ENCODE measurements at regions of chr6 and their contacts with region 1.

Region 1: DNA sequence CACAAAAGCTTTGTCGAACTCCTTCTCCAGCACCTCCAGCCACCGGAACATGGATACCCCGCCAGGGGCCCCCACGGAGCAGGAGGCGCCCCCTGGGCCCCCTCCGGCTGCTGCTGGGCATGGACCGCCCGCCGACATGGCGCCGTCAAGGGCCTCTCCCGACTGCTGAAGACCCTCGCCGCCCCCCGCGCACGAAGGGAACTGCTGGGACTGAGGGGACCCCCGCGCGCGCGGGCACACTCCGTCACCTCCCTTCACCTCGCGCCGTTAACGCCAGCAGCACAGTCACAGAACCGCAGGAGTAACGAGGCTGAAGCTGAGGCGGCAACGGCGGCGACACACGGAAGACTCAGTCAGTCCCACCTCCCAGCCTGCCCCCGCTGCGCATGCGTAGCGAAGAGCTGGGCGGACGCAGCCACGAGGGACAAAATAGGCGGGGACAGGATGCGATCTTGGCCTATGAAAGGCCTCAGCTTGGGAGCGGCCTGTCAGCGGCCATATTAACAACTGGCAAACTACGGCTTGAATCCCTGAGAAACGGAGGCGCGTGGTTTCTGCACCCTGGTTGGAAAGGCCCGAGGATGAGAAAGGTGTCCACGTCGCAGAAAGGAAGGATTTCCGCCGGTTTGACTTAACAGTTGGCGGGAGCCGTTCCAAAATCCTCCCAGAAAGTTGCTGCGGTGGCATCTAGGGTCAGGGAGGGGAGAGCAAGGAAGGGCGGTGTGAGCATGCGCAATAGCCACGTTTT is at the start of gene GOPC:
- DNase-seq: peak; percentile 91 to 98
- H3K4me3 ChIP-seq: peak within 1 kb of the TSS; percentile 93
- H3K27ac ChIP-seq: peak within 1 kb of the TSS; percentile 80 to 89
- H3K4me1 ChIP-seq: peaks cover 0 to 14% of the 10 kb centered on the region in 2 donors
- H3K27me3 ChIP-seq: no peaks in the 10 kb centered on the region
- CTCF ChIP-seq: peak; percentile 6 to 24 (median 9)
- total RNA-seq, gene GOPC: 12.5 TPM

Region 2: DNA sequence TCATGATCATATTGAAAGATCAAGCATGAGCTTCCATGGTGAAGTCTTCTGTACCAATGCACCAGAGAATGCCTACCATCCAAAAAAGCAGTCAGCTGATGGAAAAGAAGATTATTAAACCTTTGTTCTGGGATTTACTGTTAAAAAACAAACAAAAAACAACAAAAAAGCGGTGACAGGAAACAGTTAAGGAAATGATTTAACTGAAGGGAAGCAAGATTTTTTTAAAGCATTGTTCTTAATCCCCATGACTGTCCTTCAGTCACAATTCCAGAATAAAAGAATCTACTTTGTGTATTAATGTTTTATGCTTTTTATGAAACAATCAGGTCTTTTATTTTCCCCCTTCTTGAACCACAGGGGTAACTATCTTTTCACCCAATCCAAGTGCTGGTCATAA is 860.8 kb before region 1 on chr6:
- intact Hi-C with region 1: no loop called
- DNase-seq: no peak
- H3K4me3 ChIP-seq: no peak overlapping the region
- H3K27ac ChIP-seq: no peak overlapping the region
- H3K4me1 ChIP-seq: no peaks in the 10 kb centered on the region
- H3K27me3 ChIP-seq: no peaks in the 10 kb centered on the region
- CTCF ChIP-seq: no peak

Region 3: GRCh38 chr6:117373211-117373813 is 229.0 kb before region 1 on chr6:
- intact Hi-C with region 1: no loop called
- DNase-seq: no peak
- H3K4me3 ChIP-seq: no peak overlapping the region
- H3K27ac ChIP-seq: no peak overlapping the region
- H3K4me1 ChIP-seq: no peaks in the 10 kb centered on the region
- H3K27me3 ChIP-seq: no peaks in the 10 kb centered on the region
- CTCF ChIP-seq: no peak

Region 4: DNA sequence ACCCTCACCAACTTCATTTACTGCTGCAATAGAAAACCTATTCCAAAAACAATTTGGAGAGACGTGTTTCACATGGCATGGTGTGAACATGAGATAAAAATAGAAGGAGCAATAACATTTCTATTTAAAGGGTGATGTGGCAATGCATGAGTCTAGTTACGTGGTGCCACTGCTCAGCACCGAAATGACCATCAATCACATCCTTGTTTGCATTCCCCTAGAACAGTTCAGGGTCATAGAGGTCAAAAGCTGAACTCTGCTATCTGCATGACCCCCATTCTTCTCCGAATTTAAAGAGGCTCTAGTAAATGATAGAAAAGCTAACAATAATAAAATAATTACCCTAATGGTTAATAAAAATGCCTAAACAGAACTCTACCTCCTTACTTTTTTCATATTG is 206.1 kb before region 1 on chr6:
- intact Hi-C with region 1: loop called (anchors 1 kb)
- DNase-seq: no peak
- H3K4me3 ChIP-seq: no peak overlapping the region
- H3K27ac ChIP-seq: peak overlapping the region in 1 of 2 donors; percentile 79
- H3K4me1 ChIP-seq: no peaks in the 10 kb centered on the region
- H3K27me3 ChIP-seq: no peaks in the 10 kb centered on the region
- CTCF ChIP-seq: no peak

Region 5: DNA sequence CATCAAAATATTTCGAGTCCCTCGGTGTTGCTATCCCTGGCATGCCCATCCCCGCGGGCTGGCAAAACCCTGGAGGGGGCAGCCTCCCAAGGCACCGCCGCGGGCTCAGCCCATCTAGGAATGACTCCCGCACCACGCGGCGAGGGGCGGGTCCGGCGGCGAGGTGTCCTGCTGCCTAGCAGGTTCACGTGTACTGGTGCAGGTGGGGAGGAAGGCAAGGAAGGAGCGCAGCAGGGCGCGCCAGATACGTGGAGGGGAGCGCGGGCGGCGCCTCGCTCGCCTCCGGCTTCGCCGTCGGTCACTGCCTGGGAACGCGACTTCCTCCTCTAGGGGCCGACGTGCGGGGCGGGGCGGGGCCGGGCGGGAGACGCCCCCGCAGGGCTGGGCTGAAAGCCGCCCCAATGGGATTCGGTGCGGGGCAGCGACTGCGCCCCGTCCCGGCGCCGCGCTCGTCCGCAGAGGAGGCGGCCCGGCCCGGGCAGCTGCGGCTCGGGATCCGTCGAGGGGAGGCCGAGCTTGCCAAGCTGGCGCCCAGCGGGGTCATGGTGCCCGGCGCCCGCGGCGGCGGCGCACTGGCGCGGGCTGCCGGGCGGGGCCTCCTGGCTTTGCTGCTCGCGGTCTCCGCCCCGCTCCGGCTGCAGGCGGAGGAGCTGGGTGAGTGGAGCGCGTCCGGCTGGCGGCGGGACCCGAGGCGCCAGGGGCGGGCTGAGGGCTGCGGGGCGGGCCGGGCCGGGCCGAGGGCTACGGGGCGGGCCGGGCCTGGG is 119.9 kb before region 1 on chr6 and contains the start of gene DCBLD1:
- intact Hi-C with region 1: loop called (anchors 2 kb)
- DNase-seq: peak; percentile 16 to 89
- H3K4me3 ChIP-seq: peak within 1 kb of the TSS; percentile 70 to 83
- H3K27ac ChIP-seq: peak within 1 kb of the TSS; percentile 87 to 91
- H3K4me1 ChIP-seq: peaks cover 4 to 7% of the 10 kb centered on the region in 2 donors
- H3K27me3 ChIP-seq: no peaks in the 10 kb centered on the region
- CTCF ChIP-seq: peak in 2 of 3 experiments; percentile 13 to 20
- total RNA-seq, gene DCBLD1: 0.85 TPM

Region 6: GRCh38 chr6:117521791-117522502 is 80.4 kb before region 1 on chr6:
- intact Hi-C with region 1: no loop called
- DNase-seq: no peak
- H3K4me3 ChIP-seq: no peak overlapping the region
- H3K27ac ChIP-seq: no peak overlapping the region
- H3K4me1 ChIP-seq: no peaks in the 10 kb centered on the region
- H3K27me3 ChIP-seq: no peaks in the 10 kb centered on the region
- CTCF ChIP-seq: no peak

Region 7: DNA sequence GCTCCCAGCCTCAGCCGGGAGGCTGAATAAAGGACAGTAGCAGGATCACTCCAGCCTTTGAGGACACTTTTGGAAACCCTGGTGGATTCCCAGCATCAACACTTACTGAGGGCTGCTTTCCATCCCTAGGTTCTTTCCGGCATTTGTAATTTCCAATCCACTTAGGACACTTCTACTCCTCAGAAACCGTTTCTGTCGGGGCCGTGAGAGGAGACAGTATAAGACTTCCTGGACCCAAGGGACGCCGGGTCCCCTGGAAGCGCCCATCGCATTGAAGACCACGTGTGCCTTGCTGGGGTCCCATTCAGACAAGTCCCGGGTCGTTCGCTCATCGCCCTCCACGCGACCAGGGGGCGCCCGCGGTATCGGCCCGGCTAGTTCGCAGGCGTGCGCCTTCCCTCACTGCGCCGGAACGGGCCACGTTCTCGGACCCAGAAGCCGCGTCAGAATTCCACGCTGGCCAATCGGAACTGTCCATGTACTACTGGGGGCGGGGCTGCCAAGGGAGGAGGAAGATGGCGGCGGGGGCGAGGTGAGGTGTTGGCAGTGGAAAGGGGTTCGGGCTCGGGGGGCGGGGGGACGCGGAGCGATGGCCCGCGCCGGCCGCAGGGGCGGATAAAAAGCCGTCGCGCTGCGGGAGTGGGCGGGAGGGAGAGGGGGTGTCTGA is 72.8 kb after region 1 on chr6 and contains the start of gene NUS1:
- intact Hi-C with region 1: loop called (anchors 1 kb)
- DNase-seq: peak; percentile 89 to 99
- H3K4me3 ChIP-seq: peak within 1 kb of the TSS; percentile 81 to 92
- H3K27ac ChIP-seq: peak within 1 kb of the TSS; percentile 79 to 82
- H3K4me1 ChIP-seq: peaks cover 0 to 9% of the 10 kb centered on the region in 2 donors
- H3K27me3 ChIP-seq: no peaks in the 10 kb centered on the region
- CTCF ChIP-seq: peak; percentile 59 to 89 (median 84)
- total RNA-seq, gene NUS1: 14.6 TPM

Measured in ascending aorta (tissue), 2 donors.